Mammary epithelial cell (primary cell): ENCODE measurements at regions of chr5 and their contacts with region 1.

Region 1: DNA sequence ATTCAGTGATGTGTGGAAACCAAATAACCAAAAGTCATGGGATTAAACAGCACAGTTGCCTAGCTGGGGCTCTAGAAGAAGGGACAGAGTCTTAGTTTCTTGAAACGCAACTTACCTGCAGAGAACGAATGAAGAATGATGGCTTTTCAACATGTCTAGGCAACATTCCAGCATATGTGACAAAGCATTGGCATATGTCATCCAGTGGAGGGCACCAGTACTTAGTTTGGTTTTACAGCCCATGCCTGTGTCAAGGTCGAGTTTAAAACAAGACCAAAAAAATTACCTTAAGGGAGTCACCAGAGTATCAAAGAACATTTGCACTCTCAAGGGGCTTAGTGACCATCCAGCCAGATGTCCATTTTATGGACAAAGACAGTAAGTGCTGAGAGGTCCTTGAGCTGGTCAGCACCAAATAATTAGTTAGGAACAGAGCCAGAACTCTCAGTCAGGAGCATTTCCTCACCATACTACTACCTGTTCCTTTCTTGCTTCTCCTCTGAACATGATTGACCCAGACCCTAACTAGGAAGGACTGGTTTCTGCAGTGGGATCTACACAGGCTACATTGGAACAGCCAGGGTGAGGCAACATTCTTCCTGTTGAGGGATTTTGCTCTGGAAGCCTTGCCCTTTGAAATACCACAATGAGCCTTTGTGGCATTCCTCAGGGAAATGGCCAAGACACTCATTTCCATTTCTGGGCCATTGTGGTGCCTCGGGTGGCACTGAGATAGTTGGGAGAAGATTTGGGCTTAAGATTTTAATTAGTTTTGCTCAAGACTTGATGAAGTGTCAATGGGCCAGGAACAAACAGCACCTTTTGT is 75.5 kb upstream of the ANKH start:
- DNase-seq: peak; percentile 40
- H3K4me3 ChIP-seq: no peak overlapping the region
- H3K27ac ChIP-seq: no peak overlapping the region
- H3K4me1 ChIP-seq: peaks cover 13% of the 10 kb centered on the region
- H3K27me3 ChIP-seq: no peaks in the 10 kb centered on the region
- CTCF ChIP-seq: peak; percentile 56 to 66

Region 2: DNA sequence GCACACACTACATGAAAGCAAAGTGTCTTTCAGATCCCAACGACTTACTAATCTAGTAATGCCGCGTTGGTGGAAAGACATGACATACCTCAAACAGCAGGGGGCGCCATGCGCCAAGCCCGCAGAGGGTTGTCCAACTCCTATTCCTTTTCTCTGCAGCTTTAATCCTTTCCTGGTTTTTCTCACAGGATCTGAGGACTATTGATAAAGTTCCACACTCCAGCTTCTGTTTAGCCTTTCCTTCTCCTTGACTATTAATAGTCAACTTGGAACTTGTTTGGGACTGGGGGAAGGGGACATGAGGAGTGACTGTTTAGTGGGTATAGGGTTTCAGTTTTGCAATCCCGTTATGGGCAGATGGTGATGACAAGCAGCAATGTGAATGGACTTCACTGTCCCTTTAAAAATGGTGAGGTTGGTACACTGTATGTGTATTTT is 219.6 kb before region 1 on chr5:
- CTCF ChIA-PET with region 1: no interaction called
- dilution Hi-C with region 1: no loop called
- in situ Hi-C with region 1: no loop called
- intact Hi-C with region 1: loop called (anchors 10 kb)
- DNase-seq: peak; percentile 58
- H3K4me3 ChIP-seq: no peak overlapping the region
- H3K27ac ChIP-seq: no peak overlapping the region
- H3K4me1 ChIP-seq: no peaks in the 10 kb centered on the region
- H3K27me3 ChIP-seq: no peaks in the 10 kb centered on the region
- CTCF ChIP-seq: peak; percentile 94 to 95